Heart left ventricle (tissue), 16 donors: ENCODE measurements at regions of chr9 and their contacts with region 1.

Region 1: GRCh38 chr9:110058304-110058953 is 149.5 kb downstream of the C9orf152 start:
- DNase-seq: peak in 1 of 5 donors; percentile 44
- ATAC-seq: peak; percentile 48 to 68 (median 62)
- H3K4me3 ChIP-seq: no peak overlapping the region
- H3K27ac ChIP-seq: peak overlapping the region in 8 of 12 donors; percentile 0 to 55 (median 9)
- H3K4me1 ChIP-seq: peaks cover 0 to 45% (median 36%) of the 10 kb centered on the region in 12 donors
- H3K27me3 ChIP-seq: no peaks in the 10 kb centered on the region
- CTCF ChIP-seq: peak; percentile 28 to 66 (median 48)
- POLR2A ChIP-seq: no peak

Region 2: GRCh38 chr9:109903515-109904138 is 154.8 kb before region 1 on chr9:
- intact Hi-C with region 1: loop called in 9 of 10 experiments (anchors 2 to 5 kb)
- DNase-seq: peak in 4 of 5 donors; percentile 47 to 64 (median 60)
- ATAC-seq: peak; percentile 24 to 66 (median 42)
- H3K4me3 ChIP-seq: no peak overlapping the region
- H3K27ac ChIP-seq: peak overlapping the region in 1 of 12 donors; percentile 3
- H3K4me1 ChIP-seq: peaks cover 9 to 68% (median 29%) of the 10 kb centered on the region in 12 donors
- H3K27me3 ChIP-seq: no peaks in the 10 kb centered on the region
- CTCF ChIP-seq: peak; percentile 63 to 90 (median 82)
- POLR2A ChIP-seq: no peak

Region 3: GRCh38 chr9:109996936-109997580 is 61.4 kb before region 1 on chr9:
- intact Hi-C with region 1: loop called in 1 of 10 experiments (anchors 5 kb)
- DNase-seq: no peak
- ATAC-seq: no peak
- H3K4me3 ChIP-seq: no peak overlapping the region
- H3K27ac ChIP-seq: peak overlapping the region in 7 of 12 donors; percentile 23 to 69 (median 53)
- H3K4me1 ChIP-seq: peaks cover 0 to 48% (median 17%) of the 10 kb centered on the region in 12 donors
- H3K27me3 ChIP-seq: no peaks in the 10 kb centered on the region
- CTCF ChIP-seq: no peak
- POLR2A ChIP-seq: no peak

Region 4: DNA sequence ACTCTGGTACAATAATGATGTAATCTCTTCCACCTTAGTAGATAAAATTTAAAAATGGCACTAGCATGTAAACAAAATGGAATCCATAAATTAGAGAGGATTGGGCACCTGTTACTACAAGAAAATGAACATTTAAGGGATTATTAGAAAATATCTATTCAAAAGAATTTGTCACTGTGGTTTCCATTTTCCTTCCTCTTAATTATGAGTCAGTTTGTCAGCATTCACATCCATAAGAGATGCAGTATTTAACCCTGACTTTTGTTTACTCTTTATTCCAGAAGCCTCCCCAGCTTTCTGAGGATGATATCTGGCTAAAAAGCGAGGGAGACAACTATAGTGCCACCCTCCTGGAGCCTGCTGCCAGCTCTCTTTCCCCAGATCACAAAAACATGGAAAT is 77.4 kb after region 1 on chr9:
- intact Hi-C with region 1: loop called in 3 of 10 experiments (anchors 5 to 10 kb)
- DNase-seq: no peak
- ATAC-seq: no peak
- H3K4me3 ChIP-seq: no peak overlapping the region
- H3K27ac ChIP-seq: peak overlapping the region in 5 of 12 donors; percentile 11 to 53 (median 31)
- H3K4me1 ChIP-seq: peaks cover 4 to 94% (median 83%) of the 10 kb centered on the region in 12 donors
- H3K27me3 ChIP-seq: no peaks in the 10 kb centered on the region
- CTCF ChIP-seq: no peak
- POLR2A ChIP-seq: no peak

Region 5: GRCh38 chr9:110170357-110171257 is 112.2 kb after region 1 on chr9:
- intact Hi-C with region 1: no loop called
- DNase-seq: no peak
- ATAC-seq: no peak
- H3K4me3 ChIP-seq: no peak overlapping the region
- H3K27ac ChIP-seq: no peak overlapping the region
- H3K4me1 ChIP-seq: peaks cover 0 to 38% (median 18%) of the 10 kb centered on the region in 12 donors
- H3K27me3 ChIP-seq: no peaks in the 10 kb centered on the region
- CTCF ChIP-seq: no peak
- POLR2A ChIP-seq: no peak